PC-9 (cell line): ENCODE measurements at regions of chr9 and their contacts with region 1.

Region 1: DNA sequence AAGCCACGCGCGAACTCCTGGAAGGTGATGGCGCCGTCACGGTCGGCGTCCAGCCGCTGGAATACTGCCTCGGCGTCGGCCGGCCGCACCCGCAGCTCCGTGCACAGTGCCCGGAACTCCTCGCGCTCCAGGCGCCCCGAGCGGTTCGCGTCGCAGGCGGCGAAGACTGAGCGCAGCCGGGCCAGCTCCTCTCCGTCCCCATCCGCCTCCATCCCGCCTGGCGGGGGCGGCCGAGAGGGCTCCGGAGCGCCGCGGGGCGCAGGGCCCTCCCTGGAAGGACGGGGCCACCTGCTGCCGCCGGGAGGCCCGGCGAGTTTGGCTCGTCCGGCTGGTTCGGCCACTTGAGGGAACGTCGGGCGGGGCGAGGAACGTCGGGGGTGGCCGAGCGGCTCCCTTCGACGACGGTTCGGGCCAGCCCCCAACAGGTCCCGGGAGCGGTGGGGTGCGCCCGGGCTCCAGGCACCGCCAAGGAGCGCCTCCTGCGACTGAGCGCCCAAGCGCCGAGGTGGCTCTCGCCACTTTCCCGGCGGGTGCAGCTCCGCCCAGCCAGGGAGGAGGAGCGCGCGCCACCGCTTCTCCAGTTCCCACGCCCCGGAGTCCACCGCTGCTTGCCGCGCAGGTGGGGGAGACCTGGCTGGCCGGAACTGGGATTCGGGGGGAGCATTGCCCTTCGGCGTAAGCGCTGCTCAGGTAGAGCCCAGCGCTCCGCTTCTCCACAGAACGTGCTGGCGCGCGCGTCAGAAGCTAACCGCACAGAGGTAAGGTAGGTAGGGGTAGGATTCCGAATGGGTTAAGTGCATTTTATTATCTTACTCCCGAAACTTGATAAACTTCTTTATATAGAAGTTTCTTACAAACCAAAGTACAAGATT is at the start of gene RASEF:
- DNase-seq: peak; percentile 84 to 95
- H3K4me3 ChIP-seq: peak within 1 kb of the TSS; percentile 67
- H3K27ac ChIP-seq: peak within 1 kb of the TSS; percentile 92
- H3K4me1 ChIP-seq: peaks cover 39% of the 10 kb centered on the region
- H3K27me3 ChIP-seq: no peaks in the 10 kb centered on the region
- CTCF ChIP-seq: no peak; the same call in 1 of the 2 replicates
- total RNA-seq, gene RASEF: 10.8 and 12.8 TPM in 2 replicates

Region 2: DNA sequence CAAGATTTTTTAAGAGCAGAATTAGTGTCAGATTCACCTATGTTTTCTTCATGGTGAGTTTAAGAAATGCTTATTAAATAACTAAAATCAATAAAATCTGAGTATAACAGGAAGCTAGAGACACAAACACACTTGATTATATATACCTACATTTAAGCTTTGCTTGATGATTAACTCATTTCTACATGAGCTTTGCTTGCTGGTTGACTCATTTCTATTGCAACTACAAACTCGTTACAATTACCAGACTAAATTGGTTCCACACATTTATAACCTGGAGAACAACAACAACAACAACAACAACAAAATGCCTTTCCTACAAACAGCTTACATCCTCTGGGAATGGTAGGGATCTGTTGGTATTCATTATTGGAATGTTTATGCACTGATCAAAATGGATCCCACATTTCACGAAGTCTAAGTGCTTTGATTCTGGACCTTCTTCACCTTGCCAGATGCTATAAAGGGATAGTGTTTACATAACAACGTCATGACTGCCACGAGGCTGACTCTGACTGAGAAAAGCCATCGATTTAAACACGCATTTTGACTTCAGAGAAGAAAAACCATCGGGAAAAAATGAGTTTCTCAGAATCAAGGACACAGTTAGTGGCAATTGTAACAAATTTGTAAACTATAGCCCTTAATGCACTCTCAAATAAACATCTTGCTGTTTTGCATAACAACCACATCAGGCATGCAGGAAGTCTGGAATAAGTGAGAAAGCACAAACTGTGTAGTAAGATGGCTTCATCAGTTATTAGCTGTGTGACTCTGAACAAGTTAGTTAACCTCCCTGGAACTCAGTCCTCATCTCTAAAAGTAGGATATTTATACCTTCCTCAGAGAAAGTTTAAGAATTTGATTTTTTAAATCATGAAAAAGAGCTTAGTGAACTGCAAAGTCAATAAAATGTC is 49.7 kb before region 1 on chr9:
- CTCF ChIA-PET with region 1: no interaction called
- POLR2A ChIA-PET with region 1: no interaction called
- intact Hi-C with region 1: loop called (anchors 5 kb)
- DNase-seq: no peak
- H3K4me3 ChIP-seq: no peak overlapping the region
- H3K27ac ChIP-seq: no peak overlapping the region
- H3K4me1 ChIP-seq: no peaks in the 10 kb centered on the region
- H3K27me3 ChIP-seq: no peaks in the 10 kb centered on the region
- CTCF ChIP-seq: no peak

Region 3: DNA sequence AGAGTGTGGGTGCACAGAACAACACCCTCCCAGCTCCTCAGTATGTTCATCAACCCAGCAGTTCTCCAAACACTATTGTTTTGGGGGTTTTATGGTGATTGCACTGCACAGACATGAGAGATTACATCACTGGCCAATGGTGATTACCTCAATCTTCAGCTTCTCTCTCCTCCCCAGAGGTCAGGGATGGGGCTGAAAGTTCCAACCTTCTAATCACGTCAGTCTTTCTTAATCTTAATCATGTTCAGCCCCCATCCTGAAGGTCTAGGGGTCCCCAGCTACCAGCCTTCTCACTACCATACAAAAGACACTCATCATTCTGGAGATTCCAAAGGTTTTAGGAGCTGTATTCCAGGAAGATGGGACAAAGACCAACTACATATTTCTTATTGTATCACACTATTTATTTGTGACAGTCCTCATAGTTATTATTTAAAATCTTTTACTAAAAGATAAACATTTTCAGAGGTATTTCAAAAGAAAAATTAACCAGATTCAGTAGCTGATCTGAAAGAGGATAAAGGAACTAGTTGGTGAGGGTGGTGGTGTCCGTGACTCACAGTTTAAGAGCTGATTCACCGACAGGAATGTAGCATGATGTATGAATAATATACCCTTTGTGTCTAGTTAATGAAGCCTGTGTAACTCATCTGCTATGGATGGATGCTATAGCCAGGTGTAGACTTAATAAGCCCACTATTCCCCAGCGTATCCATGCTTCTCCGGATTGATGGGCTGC is 35.6 kb before region 1 on chr9:
- CTCF ChIA-PET with region 1: no interaction called
- POLR2A ChIA-PET with region 1: no interaction called
- intact Hi-C with region 1: loop called (anchors 1 kb)
- DNase-seq: peak; percentile 44 to 93
- H3K4me3 ChIP-seq: peak overlapping the region; percentile 23; the same call in 1 of the 2 replicates
- H3K27ac ChIP-seq: peak overlapping the region; percentile 83
- H3K4me1 ChIP-seq: peaks cover 26% of the 10 kb centered on the region
- H3K27me3 ChIP-seq: no peaks in the 10 kb centered on the region
- CTCF ChIP-seq: no peak

Region 4: GRCh38 chr9:83154087-83154736 is 91.3 kb after region 1 on chr9:
- CTCF ChIA-PET with region 1: no interaction called
- POLR2A ChIA-PET with region 1: interaction called, 4 read pairs
- intact Hi-C with region 1: loop called (anchors 1 kb)
- DNase-seq: peak; percentile 39 to 47
- H3K4me3 ChIP-seq: no peak overlapping the region
- H3K27ac ChIP-seq: peak overlapping the region; percentile 24; the same call in 1 of the 2 replicates
- H3K4me1 ChIP-seq: peaks cover 18% of the 10 kb centered on the region
- H3K27me3 ChIP-seq: no peaks in the 10 kb centered on the region
- CTCF ChIP-seq: no peak